ENCODE measurements at regions of chr19 and their contacts with region 1.

Region 1: DNA sequence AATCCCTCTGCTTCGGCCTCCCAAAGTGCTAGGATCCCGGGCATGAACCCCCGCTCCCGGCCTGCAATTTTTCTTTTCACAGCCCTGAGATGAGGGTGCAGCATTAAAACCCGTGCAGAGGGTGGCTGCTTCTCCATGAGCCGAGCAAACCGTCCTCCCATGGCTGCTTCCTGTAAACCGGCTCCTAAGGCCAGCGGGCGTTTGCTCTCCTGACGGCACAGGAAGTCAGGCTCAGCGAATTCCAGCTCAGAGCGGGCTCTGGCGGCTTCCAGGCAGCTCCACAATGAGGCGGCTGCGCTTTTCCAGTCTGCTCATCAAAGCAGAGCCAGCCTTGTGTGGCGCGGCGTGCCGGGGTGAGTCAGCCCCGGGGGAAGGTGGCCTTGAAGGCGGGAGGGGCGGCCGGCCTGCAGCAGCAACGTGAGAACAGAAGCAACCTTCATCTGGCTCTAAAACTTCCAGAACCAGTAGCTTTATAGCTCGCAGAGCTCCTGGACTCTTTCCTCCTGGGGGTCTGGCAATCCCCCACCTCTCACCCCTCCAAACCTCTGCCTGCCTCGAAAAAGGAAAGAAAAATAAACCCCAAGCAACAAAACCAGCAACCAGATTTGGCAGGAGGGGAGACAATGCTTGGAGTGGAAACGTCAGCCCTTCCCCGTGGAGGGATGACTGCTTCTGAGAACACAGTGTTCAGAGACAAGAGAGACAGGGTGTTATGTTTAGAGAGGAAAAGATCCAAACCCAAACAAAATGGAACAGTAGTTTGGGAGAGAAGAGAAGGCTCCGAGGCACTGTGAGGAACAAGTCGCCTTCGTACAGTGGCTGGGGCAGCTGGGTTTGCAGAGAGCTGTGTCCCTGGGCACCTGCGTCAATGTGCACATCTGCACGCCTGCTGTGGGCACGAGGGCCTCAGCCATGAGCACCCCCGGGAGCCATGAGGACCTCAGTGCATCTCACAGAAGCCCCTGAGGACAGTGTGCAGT is 67.8 kb downstream of the GADD45B start:
- DNase-seq: peak; percentile 76
- ATAC-seq: peak; percentile 91
- H3K4me3 Mint-ChIP-seq: peak overlapping the region; percentile 75
- H3K27ac Mint-ChIP-seq: peak overlapping the region; percentile 90
- H3K4me1 Mint-ChIP-seq: peaks cover 15% of the 10 kb centered on the region
- H3K27me3 Mint-ChIP-seq: no peaks in the 10 kb centered on the region

Region 2: DNA sequence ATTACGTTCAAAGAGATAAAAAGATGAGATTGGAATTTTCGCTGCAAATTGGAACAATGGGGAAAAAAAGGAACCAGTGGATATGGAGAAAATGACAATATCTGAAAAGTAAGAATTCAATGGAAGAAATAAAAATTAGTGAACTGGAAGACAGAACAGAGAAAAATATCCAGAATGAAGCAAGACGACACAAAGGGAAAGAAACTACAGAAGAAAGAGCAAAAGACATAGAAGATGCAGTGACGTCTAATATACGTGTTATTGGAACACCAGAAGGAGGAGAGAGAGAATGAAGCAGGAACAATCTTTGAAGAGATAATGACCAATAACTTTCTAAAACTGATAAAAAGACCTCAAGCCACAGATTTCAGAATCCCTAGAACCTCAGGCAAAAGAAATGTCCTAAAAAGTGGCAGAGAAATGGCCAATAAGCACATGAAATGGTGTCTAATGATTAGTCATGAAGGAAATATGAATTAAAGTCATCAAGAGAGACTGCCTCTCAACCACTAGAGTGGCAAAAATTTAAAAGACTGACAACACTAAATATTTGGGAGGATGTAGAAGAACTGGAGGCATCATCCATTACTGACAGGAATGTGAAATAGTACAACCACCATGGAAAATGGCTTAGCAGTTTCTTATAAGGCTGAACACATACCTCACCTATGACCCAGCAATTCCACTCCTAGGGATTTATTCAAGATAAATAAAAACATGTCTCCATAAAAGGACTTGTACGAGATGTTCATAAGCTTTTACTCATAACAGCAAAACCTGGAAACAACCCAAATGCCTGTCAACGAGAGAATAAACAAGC is 11.3 kb before region 1 on chr19:
- POLR2A ChIA-PET with region 1: interaction called, 11 read pairs
- DNase-seq: no peak
- ATAC-seq: no peak
- H3K4me3 Mint-ChIP-seq: no peak overlapping the region
- H3K27ac Mint-ChIP-seq: no peak overlapping the region
- H3K4me1 Mint-ChIP-seq: peaks cover 12% of the 10 kb centered on the region
- H3K27me3 Mint-ChIP-seq: no peaks in the 10 kb centered on the region

Region 3: DNA sequence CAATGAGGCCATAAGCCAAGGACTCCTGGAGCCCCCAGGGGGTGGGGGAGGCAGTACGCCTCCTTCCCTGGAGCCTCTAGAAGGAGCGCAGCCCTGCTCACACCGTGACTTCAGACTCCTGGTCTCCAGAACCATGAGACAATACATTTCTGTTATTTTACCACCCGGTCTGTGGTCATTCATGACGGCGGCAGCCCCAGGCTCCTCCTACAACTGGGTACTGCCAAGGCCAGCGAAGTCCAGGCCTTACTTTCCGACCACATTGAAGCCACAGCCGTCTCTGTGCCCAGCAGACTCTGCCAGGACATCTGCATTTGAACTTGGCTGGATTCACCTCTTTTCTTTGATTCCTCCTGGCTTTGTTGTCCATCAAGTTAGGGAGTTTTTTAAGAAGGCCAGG is 148.2 kb after region 1 on chr19:
- POLR2A ChIA-PET with region 1: no interaction called
- DNase-seq: no peak
- ATAC-seq: no peak
- H3K4me3 Mint-ChIP-seq: no peak overlapping the region
- H3K27ac Mint-ChIP-seq: no peak overlapping the region
- H3K4me1 Mint-ChIP-seq: no peaks in the 10 kb centered on the region
- H3K27me3 Mint-ChIP-seq: no peaks in the 10 kb centered on the region

Measured in activated naive CD8-positive, alpha-beta T cell treated with anti-CD3 and anti-CD28 coated beads, Interleukin-2, amount 10 ng/mL, durations not matched to agents 7 days and 5 days (primary cell).